ENCODE measurements at regions of chr10 and their contacts with region 1.

Region 1: DNA sequence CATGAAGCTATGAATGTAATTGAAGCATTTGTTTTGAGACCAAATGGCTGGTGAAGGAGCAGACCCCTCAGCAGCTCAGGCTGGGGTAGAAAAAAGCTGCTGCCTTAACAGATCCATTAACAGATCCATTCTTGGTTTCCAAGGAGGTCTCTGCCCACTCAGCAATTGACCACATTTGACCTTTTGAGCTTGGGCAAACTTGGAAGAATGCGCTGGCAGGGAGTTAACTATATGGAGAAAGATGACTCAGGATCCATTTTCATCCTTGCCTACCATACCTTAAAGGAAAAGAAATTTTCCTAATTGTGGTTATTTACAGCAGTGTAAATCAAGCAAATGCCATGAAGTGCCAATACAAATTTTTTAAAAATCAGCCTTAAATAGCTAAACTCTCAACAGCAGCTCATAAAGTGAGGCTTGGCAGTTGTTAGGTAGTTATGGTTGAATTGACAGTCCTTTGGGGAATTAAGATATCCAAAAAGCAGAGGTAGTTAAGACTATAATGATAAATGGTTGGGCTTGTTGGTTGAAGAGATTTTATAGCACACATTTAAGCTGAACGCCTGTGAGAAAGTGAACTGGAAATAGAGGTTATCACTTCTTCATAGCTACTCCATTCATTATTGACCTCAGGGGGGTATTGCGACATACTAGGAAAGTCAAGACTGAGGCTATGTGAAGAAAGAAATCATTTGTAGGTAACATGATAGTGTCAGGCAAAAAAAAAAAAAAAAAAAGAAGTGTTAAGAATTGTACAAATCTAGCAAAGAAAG is 83.9 kb downstream of the MKX start:
- DNase-seq: peak; percentile 65
- H3K4me3 ChIP-seq: no peak overlapping the region
- H3K27ac ChIP-seq: no peak overlapping the region
- H3K4me1 ChIP-seq: no peaks in the 10 kb centered on the region
- H3K27me3 ChIP-seq: peaks cover 43% of the 10 kb centered on the region
- CTCF ChIP-seq: no peak

Region 2: DNA sequence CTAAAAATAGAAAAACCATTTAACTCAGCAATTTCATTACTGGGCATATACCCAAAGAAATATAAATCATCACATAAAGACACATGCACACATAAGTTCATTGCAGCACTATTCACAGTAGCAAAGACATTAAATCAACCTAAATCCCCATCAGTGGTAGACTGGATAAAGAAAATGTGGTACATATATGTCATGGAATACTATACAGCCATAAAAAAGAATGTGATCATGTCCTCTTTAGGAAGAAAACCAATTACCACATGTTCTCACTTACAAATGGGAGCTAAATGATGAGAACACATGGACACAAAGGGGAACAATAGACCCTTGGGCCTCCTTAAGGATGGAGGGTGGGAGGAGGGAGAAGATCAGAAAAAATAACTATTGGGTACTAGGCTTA is 385.1 kb before region 1 on chr10:
- CTCF ChIA-PET with region 1: no interaction called
- POLR2A ChIA-PET with region 1: no interaction called
- intact Hi-C with region 1: no loop called
- DNase-seq: no peak
- H3K4me3 ChIP-seq: no peak overlapping the region
- H3K27ac ChIP-seq: no peak overlapping the region
- H3K4me1 ChIP-seq: no peaks in the 10 kb centered on the region
- H3K27me3 ChIP-seq: peaks cover 32% of the 10 kb centered on the region
- CTCF ChIP-seq: no peak

Region 3: DNA sequence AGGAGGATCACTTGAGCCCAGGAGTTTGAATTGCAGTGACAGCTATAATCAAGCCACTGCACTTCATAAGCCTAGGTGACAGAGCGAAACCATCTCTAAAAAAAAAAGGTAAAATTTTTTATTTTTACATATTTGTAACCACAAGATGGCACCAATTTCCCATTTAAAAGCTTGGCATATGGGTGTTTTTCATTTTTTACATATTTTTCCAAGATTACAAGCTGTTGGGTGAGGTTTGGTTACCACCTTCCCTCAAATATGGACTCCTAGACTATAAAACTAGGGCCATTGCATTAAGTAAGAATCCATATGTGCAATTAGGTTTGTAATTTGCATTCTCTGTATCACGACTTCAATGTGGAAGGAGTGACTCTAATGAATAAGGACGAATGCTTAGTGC is 291.8 kb before region 1 on chr10:
- CTCF ChIA-PET with region 1: no interaction called
- POLR2A ChIA-PET with region 1: no interaction called
- intact Hi-C with region 1: loop called (anchors 2 kb)
- DNase-seq: peak; percentile 12
- H3K4me3 ChIP-seq: no peak overlapping the region
- H3K27ac ChIP-seq: no peak overlapping the region
- H3K4me1 ChIP-seq: no peaks in the 10 kb centered on the region
- H3K27me3 ChIP-seq: no peaks in the 10 kb centered on the region
- CTCF ChIP-seq: peak; percentile 49; the same call in 1 of the 2 replicates

Region 4: GRCh38 chr10:27446091-27446918 is 215.4 kb before region 1 on chr10:
- CTCF ChIA-PET with region 1: no interaction called
- POLR2A ChIA-PET with region 1: no interaction called
- intact Hi-C with region 1: loop called (anchors 2 kb)
- DNase-seq: peak; percentile 65
- H3K4me3 ChIP-seq: no peak overlapping the region
- H3K27ac ChIP-seq: no peak overlapping the region
- H3K4me1 ChIP-seq: no peaks in the 10 kb centered on the region
- H3K27me3 ChIP-seq: no peaks in the 10 kb centered on the region
- CTCF ChIP-seq: peak; percentile 63

Region 5: DNA sequence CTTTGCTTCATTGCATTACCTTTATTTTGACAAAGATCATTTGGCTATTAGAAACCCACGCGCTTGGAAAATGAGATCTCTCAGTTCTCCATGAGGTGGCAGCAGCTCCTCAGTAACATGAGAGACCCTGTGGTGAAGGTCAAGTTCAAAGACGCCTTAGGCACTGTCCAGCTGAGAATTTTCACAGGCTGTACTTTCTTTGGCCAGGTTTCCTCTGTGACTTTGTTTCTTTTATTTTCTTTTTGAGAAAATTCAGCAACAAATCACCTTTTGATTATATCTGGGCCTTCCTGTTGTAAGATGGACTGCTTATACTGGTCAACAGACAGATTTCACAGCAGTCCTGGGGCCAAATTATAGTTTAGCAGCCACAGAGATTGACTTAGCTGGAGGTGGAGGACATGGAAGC is 103.1 kb before region 1 on chr10:
- CTCF ChIA-PET with region 1: no interaction called
- POLR2A ChIA-PET with region 1: no interaction called
- intact Hi-C with region 1: loop called (anchors 2 kb)
- DNase-seq: peak; percentile 39
- H3K4me3 ChIP-seq: no peak overlapping the region
- H3K27ac ChIP-seq: no peak overlapping the region
- H3K4me1 ChIP-seq: no peaks in the 10 kb centered on the region
- H3K27me3 ChIP-seq: no peaks in the 10 kb centered on the region
- CTCF ChIP-seq: peak; percentile 79

Measured in A673 (cell line).